BJ (cell line): ENCODE measurements at regions of chr14 and their contacts with region 1.

Region 1: DNA sequence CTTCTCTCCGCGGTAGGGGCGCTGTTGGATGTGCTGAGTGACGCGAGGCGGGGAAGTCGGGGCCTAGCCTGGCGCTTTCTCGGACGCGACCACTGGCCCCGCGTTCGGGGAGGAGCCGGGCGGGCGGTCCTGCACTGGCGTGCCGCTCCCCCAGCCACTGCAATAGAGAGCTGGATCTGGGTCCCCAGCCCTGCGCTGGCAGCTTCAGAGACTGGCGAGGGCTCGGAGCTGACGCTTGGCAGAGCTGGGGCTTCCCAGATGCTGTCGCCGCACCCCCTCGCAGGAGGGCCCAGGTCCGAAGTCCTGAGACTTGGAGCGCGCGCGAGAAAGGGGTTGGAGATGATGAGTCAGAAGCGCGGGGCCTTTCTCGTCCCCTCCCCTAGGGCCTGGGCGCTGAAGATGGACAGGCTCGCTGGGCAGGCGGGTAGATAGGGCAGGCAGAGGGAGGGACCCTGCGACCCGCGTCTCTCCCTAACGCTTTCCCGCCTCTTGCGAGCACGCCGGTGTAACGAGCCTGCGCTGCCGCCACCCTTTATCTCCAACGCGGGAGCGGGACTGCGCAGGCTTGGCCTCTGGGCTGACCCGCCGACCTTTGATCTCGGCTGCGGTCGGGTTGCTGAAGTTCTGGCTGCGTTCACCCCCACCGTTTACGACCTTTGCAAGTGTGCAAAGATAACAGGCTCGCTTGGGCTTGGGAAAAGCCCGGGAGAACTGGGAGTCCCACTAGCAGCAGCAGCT is 3.0 kb downstream of the TMEM253 start:
- DNase-seq: peak; percentile 67
- H3K4me3 ChIP-seq: peak overlapping the region; percentile 69
- H3K27me3 ChIP-seq: 0 out of 2 replicates have a peak, but pooled peaks cover 1% of the 10 kb centered on the region
- CTCF ChIP-seq: peak; percentile 89

Region 2: GRCh38 chr14:21039585-21040369 is 64.1 kb before region 1 on chr14:
- CTCF ChIA-PET with region 1: interaction called, 29 read pairs
- POLR2A ChIA-PET with region 1: no interaction called
- DNase-seq: no peak
- H3K4me3 ChIP-seq: no peak overlapping the region
- H3K27me3 ChIP-seq: peaks cover 6% of the 10 kb centered on the region
- CTCF ChIP-seq: peak; percentile 59

Region 3: GRCh38 chr14:21049271-21049673 is 54.6 kb before region 1 on chr14:
- CTCF ChIA-PET with region 1: interaction called, 20 read pairs
- POLR2A ChIA-PET with region 1: no interaction called
- DNase-seq: no peak
- H3K4me3 ChIP-seq: no peak overlapping the region
- H3K27me3 ChIP-seq: peaks cover 2% of the 10 kb centered on the region; the same call in 1 of the 2 replicates
- CTCF ChIP-seq: no peak

Region 4: GRCh38 chr14:21063479-21063878 is 40.4 kb before region 1 on chr14:
- CTCF ChIA-PET with region 1: interaction called, 149 read pairs
- POLR2A ChIA-PET with region 1: no interaction called
- DNase-seq: no peak
- H3K4me3 ChIP-seq: no peak overlapping the region
- H3K27me3 ChIP-seq: no peaks in the 10 kb centered on the region
- CTCF ChIP-seq: no peak